Activated CD8-positive, alpha-beta memory T cell treated with anti-CD3 and anti-CD28 coated beads, Interleukin-2, amount 10 ng/mL, durations not matched to agents 7 days and 5 days (primary cell): ENCODE measurements at regions of chr11 and their contacts with region 1.

Region 1: GRCh38 chr11:121591405-121592033 is 138.8 kb upstream of the SORL1-AS1 start:
- DNase-seq: peak; percentile 79
- ATAC-seq: peak; percentile 74
- H3K4me3 Mint-ChIP-seq: no peak overlapping the region
- H3K27ac Mint-ChIP-seq: no peak overlapping the region
- H3K4me1 Mint-ChIP-seq: peaks cover 18% of the 10 kb centered on the region
- H3K27me3 Mint-ChIP-seq: no peaks in the 10 kb centered on the region

Region 2: GRCh38 chr11:121318848-121319834 is 272.4 kb before region 1 on chr11:
- CTCF ChIA-PET with region 1: interaction called, 15 read pairs
- DNase-seq: no peak
- ATAC-seq: peak; percentile 65
- H3K4me3 Mint-ChIP-seq: no peak overlapping the region
- H3K27ac Mint-ChIP-seq: no peak overlapping the region
- H3K4me1 Mint-ChIP-seq: peaks cover 18% of the 10 kb centered on the region
- H3K27me3 Mint-ChIP-seq: peaks cover 13% of the 10 kb centered on the region

Region 3: GRCh38 chr11:121328967-121329679 is 262.4 kb before region 1 on chr11:
- CTCF ChIA-PET with region 1: interaction called, 10 read pairs
- DNase-seq: no peak
- ATAC-seq: peak; percentile 52
- H3K4me3 Mint-ChIP-seq: no peak overlapping the region
- H3K27ac Mint-ChIP-seq: no peak overlapping the region
- H3K4me1 Mint-ChIP-seq: no peaks in the 10 kb centered on the region
- H3K27me3 Mint-ChIP-seq: peaks cover 19% of the 10 kb centered on the region

Region 4: DNA sequence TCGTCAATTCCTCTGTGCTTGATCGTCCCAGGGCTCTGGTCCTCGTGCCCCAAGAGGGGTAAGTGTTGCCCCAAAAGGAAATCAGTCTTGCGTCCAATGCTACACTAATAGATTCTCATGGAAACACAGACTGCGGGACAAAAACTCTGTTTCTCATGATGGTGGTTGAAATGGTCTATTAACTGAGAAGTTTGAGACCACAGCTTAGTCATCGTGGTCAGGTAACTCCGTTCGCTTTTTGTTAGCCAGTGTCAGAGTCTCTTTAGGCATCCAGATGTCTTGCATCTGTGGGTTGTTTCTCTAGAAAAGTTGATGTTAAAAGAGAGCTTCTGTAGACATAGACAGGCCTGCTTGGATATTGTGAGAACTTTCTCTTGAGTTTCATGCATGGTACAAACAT is 34.2 kb before region 1 on chr11:
- CTCF ChIA-PET with region 1: no interaction called
- DNase-seq: no peak
- ATAC-seq: no peak
- H3K4me3 Mint-ChIP-seq: no peak overlapping the region
- H3K27ac Mint-ChIP-seq: no peak overlapping the region
- H3K4me1 Mint-ChIP-seq: peaks cover 11% of the 10 kb centered on the region
- H3K27me3 Mint-ChIP-seq: no peaks in the 10 kb centered on the region

Region 5: DNA sequence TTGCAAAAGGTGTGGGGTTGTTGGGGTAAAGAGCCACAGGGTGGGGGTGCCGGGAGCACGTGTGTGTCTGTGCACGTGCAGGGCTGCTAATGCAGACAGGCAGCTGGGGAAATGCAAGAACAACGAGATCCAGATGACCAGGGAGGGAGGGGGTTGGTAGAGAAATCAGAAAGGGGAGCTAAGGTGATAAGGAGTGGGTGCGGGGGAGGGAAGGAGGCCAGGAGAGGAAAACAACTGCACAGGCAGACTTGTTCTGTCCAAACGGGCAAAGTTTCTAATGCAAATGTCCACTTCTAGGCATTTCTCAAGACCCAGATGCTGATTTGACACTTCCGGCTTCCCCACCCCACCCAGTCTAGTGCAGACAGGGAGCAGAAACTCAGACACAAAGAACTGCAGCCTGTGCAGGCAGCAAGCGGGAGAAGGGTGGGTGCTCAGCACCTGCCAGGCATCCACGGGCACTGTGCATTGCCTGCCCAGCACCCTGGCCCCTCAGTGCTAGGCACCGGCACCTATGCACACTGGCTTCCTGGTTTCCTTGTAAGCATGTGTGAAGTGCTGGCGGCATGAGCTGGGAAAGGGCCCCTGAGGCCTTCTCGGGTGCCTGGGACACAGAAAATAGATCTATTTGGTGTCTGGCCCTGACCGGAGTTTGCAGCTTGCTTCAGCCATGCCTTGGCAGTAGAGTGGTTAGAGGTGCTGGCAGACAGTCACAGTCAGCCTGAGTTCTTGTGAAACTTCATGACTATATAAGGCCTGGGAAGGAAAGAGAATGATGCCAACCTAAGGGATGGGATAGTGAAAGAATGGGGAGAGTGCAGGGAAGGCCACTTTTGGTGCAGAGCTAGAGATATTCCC is 81.3 kb after region 1 on chr11:
- CTCF ChIA-PET with region 1: no interaction called
- DNase-seq: no peak
- ATAC-seq: no peak
- H3K4me3 Mint-ChIP-seq: no peak overlapping the region
- H3K27ac Mint-ChIP-seq: no peak overlapping the region
- H3K4me1 Mint-ChIP-seq: no peaks in the 10 kb centered on the region
- H3K27me3 Mint-ChIP-seq: no peaks in the 10 kb centered on the region

Region 6: DNA sequence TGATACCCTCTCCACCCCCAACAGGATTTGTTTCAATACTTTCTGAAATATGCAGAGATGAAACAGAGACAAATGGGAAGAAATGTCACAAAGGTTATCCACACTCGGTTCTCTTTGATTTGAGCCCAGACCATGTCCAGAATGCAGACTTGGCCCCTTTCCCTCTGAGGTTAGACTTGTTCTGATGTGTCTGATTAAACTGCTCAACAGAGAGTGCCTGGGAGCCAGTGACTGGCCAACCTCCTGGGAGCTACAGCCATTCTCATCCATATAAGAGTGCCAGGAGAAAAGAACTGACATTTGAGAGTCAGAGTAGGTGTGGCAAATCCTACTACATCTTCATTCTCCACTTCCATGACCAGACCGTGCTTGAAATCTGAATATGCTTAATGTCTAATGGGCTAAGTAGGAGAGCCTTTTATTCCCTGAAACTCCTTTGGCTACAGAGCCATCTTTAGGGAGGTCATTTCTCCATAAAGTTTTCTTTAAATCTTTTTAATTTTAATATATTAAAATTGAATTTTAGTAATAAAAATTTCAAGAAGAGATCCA is 323.1 kb after region 1 on chr11:
- CTCF ChIA-PET with region 1: no interaction called
- DNase-seq: no peak
- ATAC-seq: no peak
- H3K4me3 Mint-ChIP-seq: no peak overlapping the region
- H3K27ac Mint-ChIP-seq: no peak overlapping the region
- H3K4me1 Mint-ChIP-seq: no peaks in the 10 kb centered on the region
- H3K27me3 Mint-ChIP-seq: no peaks in the 10 kb centered on the region